HepG2 (cell line): ENCODE measurements at regions of chr1 and their contacts with region 1.

Region 1: GRCh38 chr1:212035123-212035834 is at the starts of genes DTL and INTS7:
- DNase-seq: peak; percentile 99
- ATAC-seq: peak; percentile 94
- H3K4me3 ChIP-seq: peak within 1 kb of the TSS; percentile 83 to 92 (median 89)
- H3K27ac ChIP-seq: peak within 1 kb of the TSS; percentile 93
- H3K4me1 ChIP-seq: peaks cover 62% of the 10 kb centered on the region
- H3K27me3 ChIP-seq: no peaks in the 10 kb centered on the region; a peak in 1 of 5 replicates
- CTCF ChIP-seq: peak; percentile 98
- EP300 ChIP-seq: no peak; a peak in 1 of 4 replicates
- POLR2A ChIP-seq: peak; percentile 93 to 94
- RAD21 ChIP-seq: peak; percentile 82
- total RNA-seq, gene DTL: 32.8 and 43.1 TPM in 2 replicates
- total RNA-seq, gene INTS7: 22.4 and 32.7 TPM in 2 replicates

Region 2: GRCh38 chr1:211675230-211676105 is 359.8 kb before region 1 on chr1 and contains the start of gene NEK2:
- CTCF ChIA-PET with region 1: no interaction called
- POLR2A ChIA-PET with region 1: interaction called, 20 read pairs
- in situ Hi-C with region 1: no loop called
- intact Hi-C with region 1: loop called (anchors 1 kb)
- DNase-seq: peak; percentile 99
- ATAC-seq: peak; percentile 96
- H3K4me3 ChIP-seq: peak within 1 kb of the TSS; percentile 67 to 87 (median 85)
- H3K27ac ChIP-seq: peak within 1 kb of the TSS; percentile 77
- H3K4me1 ChIP-seq: peaks cover 62% of the 10 kb centered on the region
- H3K27me3 ChIP-seq: no peaks in the 10 kb centered on the region; a peak in 1 of 5 replicates
- CTCF ChIP-seq: peak; percentile 13; the same call in 1 of the 2 replicates
- EP300 ChIP-seq: peak in 1 of 2 experiments; percentile 66; a peak in 2 of 4 replicates
- POLR2A ChIP-seq: peak; percentile 70 to 79
- RAD21 ChIP-seq: no peak; the same call in 1 of the 2 replicates
- total RNA-seq, gene NEK2: 40.8 and 57.5 TPM in 2 replicates

Region 3: GRCh38 chr1:212012034-212012740 is 23.1 kb before region 1 on chr1:
- CTCF ChIA-PET with region 1: interaction called, 30 read pairs
- POLR2A ChIA-PET with region 1: interaction called, 13 read pairs
- in situ Hi-C with region 1: no loop called
- intact Hi-C with region 1: loop called (anchors 1 kb)
- DNase-seq: peak; percentile 63
- ATAC-seq: peak; percentile 98
- H3K4me3 ChIP-seq: no peak overlapping the region
- H3K27ac ChIP-seq: no peak overlapping the region
- H3K4me1 ChIP-seq: peaks cover 10% of the 10 kb centered on the region
- H3K27me3 ChIP-seq: no peaks in the 10 kb centered on the region
- CTCF ChIP-seq: peak; percentile 93
- EP300 ChIP-seq: no peak
- POLR2A ChIP-seq: no peak
- RAD21 ChIP-seq: peak; percentile 64; the same call in 1 of the 2 replicates

Region 4: GRCh38 chr1:212432706-212433576 is 397.7 kb after region 1 on chr1 and contains the start of gene NENF:
- CTCF ChIA-PET with region 1: no interaction called
- POLR2A ChIA-PET with region 1: interaction called, 3 read pairs
- in situ Hi-C with region 1: no loop called
- intact Hi-C with region 1: loop called (anchors 1 kb)
- DNase-seq: peak; percentile 58
- ATAC-seq: peak; percentile 99
- H3K4me3 ChIP-seq: peak within 1 kb of the TSS; percentile 76 to 93 (median 86)
- H3K27ac ChIP-seq: no peak within 1 kb of the TSS
- H3K4me1 ChIP-seq: peaks cover 39% of the 10 kb centered on the region
- H3K27me3 ChIP-seq: peaks cover 0 to 7% of the 10 kb centered on the region in 2 experiments; a peak in 1 of 5 replicates
- CTCF ChIP-seq: no peak
- EP300 ChIP-seq: no peak
- POLR2A ChIP-seq: peak in 1 of 2 experiments; percentile 63; a peak in 3 of 4 replicates
- RAD21 ChIP-seq: peak; percentile 33
- total RNA-seq, gene NENF: 24.7 and 40.4 TPM in 2 replicates